ENCODE measurements at regions of chr12 and their contacts with region 1.

Region 1: DNA sequence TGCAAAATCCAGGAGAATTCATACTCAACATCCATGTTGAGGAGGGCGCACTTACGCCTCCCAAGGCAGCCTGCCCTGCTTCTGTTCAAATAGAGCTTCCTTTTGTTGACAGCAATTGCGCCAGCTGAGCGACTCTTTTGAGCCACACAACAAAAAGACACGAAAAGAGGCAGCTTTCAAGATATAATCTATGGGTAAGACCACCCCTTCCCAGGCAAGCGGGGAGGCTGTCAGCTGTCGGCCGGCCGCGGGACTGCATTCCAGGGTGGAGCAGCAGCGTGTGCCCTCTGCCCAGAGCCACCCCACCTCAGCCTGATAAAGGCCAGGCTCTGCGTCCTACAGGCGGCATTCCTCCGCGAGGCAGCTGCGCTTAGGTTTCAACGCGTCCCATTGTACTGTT is 15.8 kb upstream of the STAB2 start:
- DNase-seq: peak; percentile 41
- H3K4me3 ChIP-seq: no peak overlapping the region
- H3K27ac ChIP-seq: no peak overlapping the region
- H3K4me1 ChIP-seq: peaks cover 0 to 7% of the 10 kb centered on the region in 2 experiments; a peak in 1 of 4 replicates
- H3K27me3 ChIP-seq: no peaks in the 10 kb centered on the region; the same call in 1 of the 2 replicates
- CTCF ChIP-seq: no peak; the same call in 1 of the 2 replicates
- EP300 ChIP-seq: no peak
- RAD21 ChIP-seq: no peak

Region 2: DNA sequence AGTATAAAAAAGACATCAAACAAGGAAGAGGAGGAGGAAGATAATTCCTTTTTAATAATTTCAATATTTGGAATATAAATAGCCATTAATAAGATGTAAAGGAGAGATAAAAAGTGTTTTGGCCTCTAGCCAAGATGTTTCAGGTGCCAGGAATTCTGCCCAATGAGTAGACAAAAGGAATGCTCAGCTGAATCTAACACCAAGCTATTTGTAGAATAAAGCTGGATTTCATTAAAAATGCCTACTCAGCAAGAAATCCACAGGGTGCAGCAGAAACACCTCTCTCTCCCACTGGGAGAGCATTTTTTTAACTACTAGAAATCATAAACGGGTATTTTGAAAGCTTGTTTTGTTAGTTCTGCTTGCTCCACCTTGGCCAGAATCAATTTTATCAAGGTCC is 11.7 kb after region 1 on chr12:
- CTCF ChIA-PET with region 1: interaction called, 10 read pairs
- POLR2A ChIA-PET with region 1: no interaction called
- DNase-seq: no peak
- H3K4me3 ChIP-seq: no peak overlapping the region
- H3K27ac ChIP-seq: no peak overlapping the region
- H3K4me1 ChIP-seq: no peaks in the 10 kb centered on the region
- H3K27me3 ChIP-seq: no peaks in the 10 kb centered on the region
- CTCF ChIP-seq: no peak
- EP300 ChIP-seq: no peak
- RAD21 ChIP-seq: no peak

Region 3: DNA sequence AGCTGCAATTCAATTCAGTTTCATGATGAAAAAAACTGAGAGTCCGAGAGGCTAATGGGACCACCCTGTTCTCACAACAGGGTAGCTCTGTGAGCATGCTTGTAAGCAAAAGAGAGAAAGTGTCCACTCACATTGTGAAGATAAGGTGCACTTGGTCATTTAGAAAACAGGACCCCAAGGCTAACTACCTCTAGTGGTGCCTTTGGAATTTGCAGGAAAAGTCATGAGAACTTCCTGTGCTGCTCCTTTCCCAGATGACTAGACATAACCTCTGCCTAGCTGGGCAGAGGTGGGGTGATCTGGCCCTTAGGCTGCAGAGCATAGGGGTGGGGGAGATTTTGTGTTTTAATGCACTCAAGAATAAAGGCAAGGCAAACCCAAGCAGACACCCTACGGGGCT is 134.6 kb after region 1 on chr12:
- CTCF ChIA-PET with region 1: no interaction called
- POLR2A ChIA-PET with region 1: no interaction called
- DNase-seq: peak; percentile 15
- H3K4me3 ChIP-seq: no peak overlapping the region
- H3K27ac ChIP-seq: no peak overlapping the region
- H3K4me1 ChIP-seq: no peaks in the 10 kb centered on the region
- H3K27me3 ChIP-seq: no peaks in the 10 kb centered on the region; the same call in 1 of the 2 replicates
- CTCF ChIP-seq: no peak
- EP300 ChIP-seq: no peak
- RAD21 ChIP-seq: no peak